Caco-2 (cell line): ENCODE measurements at regions of chr1 and their contacts with region 1.

Region 1: DNA sequence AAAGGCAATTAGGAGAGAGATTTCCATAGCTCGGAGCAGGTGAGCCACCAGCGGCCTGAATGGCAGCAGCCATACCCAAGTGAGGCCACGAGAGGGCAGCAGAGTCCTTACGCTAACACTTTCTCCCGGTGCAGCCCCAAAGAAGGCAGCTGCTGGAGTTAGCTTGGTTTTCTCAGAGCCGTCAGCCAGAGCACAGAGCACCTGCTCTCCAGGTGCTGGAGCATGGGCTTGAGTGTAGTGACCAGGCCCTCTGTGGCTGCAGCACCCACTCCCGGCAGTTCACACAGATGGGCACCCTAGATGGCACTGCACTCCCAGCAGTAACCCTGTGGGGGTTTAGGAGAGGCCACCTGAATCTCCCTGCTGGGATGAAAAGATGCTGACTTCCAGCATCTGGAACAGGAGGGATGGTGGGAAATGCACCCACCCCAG is 45.8 kb downstream of the TMCC2 start:
- DNase-seq: peak; percentile 87 to 88
- H3K4me3 ChIP-seq: no peak overlapping the region
- H3K4me3 Mint-ChIP-seq: no peak overlapping the region
- H3K27ac Mint-ChIP-seq: peak overlapping the region; percentile 59
- H3K4me1 ChIP-seq: peaks cover 40% of the 10 kb centered on the region
- H3K4me1 Mint-ChIP-seq: peaks cover 17% of the 10 kb centered on the region
- H3K27me3 ChIP-seq: no peaks in the 10 kb centered on the region
- H3K27me3 Mint-ChIP-seq: no peaks in the 10 kb centered on the region
- CTCF ChIP-seq: peak; percentile 96 to 97

Region 2: DNA sequence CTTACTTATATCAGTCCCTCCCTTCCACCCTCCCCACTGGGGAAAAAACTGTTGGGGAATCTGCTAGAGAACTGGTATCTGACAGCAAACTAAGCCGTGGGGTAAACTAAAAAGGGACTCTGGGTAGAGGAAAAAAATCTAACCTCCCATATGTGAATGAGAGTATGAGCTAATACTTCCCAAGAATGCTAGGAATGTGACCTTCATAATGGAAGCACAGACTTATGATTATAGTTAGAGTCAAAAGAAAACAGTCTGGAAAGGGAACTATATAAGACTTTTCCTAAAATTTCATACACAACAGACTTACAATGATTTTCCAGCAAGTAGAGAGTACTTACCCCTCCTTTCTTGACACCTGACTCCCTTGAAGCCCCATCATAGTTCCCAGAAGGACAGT is 128.8 kb before region 1 on chr1:
- CTCF ChIA-PET with region 1: no interaction called
- POLR2A ChIA-PET with region 1: no interaction called
- intact Hi-C with region 1: no loop called
- DNase-seq: peak in 1 of 2 experiments; percentile 7
- H3K4me3 ChIP-seq: no peak overlapping the region
- H3K4me3 Mint-ChIP-seq: no peak overlapping the region
- H3K27ac Mint-ChIP-seq: no peak overlapping the region
- H3K4me1 ChIP-seq: peaks cover 15% of the 10 kb centered on the region
- H3K4me1 Mint-ChIP-seq: peaks cover 11% of the 10 kb centered on the region
- H3K27me3 ChIP-seq: no peaks in the 10 kb centered on the region
- H3K27me3 Mint-ChIP-seq: no peaks in the 10 kb centered on the region
- CTCF ChIP-seq: no peak

Region 3: GRCh38 chr1:205284343-205285144 is 11.0 kb after region 1 on chr1:
- CTCF ChIA-PET with region 1: interaction called, 30 read pairs
- POLR2A ChIA-PET with region 1: interaction called, 5 read pairs
- intact Hi-C with region 1: loop called (anchors 1 kb)
- DNase-seq: peak; percentile 95 to 98
- H3K4me3 ChIP-seq: no peak overlapping the region
- H3K4me3 Mint-ChIP-seq: peak overlapping the region; percentile 38
- H3K27ac Mint-ChIP-seq: peak overlapping the region; percentile 69
- H3K4me1 ChIP-seq: peaks cover 35% of the 10 kb centered on the region
- H3K4me1 Mint-ChIP-seq: peaks cover 41% of the 10 kb centered on the region
- H3K27me3 ChIP-seq: no peaks in the 10 kb centered on the region
- H3K27me3 Mint-ChIP-seq: no peaks in the 10 kb centered on the region
- CTCF ChIP-seq: peak in 1 of 2 experiments; percentile 28

Region 4: GRCh38 chr1:205294175-205294913 is 20.8 kb after region 1 on chr1:
- CTCF ChIA-PET with region 1: interaction called, 12 read pairs
- POLR2A ChIA-PET with region 1: no interaction called
- intact Hi-C with region 1: no loop called
- DNase-seq: peak; percentile 74 to 88
- H3K4me3 ChIP-seq: no peak overlapping the region
- H3K4me3 Mint-ChIP-seq: peak overlapping the region; percentile 46
- H3K27ac Mint-ChIP-seq: peak overlapping the region; percentile 97
- H3K4me1 ChIP-seq: peaks cover 79% of the 10 kb centered on the region
- H3K4me1 Mint-ChIP-seq: peaks cover 51% of the 10 kb centered on the region
- H3K27me3 ChIP-seq: no peaks in the 10 kb centered on the region
- H3K27me3 Mint-ChIP-seq: no peaks in the 10 kb centered on the region
- CTCF ChIP-seq: no peak

Region 5: DNA sequence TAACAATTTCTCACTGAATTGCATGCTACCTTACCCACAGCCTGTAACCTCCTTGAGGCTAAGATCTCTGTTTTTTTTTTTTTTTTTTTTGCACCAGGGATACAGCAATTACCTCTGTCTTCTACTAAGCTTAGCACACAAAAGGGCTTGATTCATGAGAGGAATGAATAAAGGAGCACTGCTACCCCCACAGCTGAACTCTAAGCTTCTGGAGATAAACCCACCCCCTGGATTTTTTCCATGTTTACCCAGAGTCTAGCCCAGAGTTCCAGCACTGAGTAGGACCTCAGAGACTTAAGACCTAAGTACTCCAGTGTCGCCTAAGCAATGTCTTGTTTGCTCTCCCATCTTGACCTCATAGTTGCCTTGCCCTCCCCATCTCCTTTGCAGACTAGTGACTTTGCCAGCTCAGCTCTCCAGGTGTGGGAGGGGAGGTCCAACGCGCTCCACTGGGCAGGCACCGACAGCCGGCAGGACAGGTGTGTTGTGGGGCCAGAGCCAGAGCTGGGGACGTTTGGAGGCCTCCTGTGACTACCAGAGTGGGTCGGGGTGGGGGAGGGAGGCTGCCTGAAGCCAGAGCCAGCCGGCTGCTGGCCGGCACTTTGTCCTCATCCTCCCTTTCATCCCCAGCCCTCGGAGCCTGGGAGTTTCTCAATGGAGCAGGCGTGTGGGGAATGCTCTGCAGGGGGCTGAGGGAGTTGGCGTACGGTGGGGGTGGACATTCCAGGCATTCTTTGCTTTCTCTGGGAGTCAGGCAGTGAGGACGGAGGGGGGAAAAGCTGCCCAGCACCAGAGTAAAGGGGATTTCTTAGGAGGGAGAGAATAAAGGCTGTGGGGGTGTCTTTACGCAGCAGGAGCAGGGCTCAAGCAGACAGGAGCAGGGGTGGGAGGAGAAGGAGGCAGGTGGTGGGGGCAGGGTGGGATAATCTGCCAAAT is 27.6 kb after region 1 on chr1:
- CTCF ChIA-PET with region 1: interaction called, 41 read pairs
- POLR2A ChIA-PET with region 1: interaction called, 9 read pairs
- intact Hi-C with region 1: loop called (anchors 1 kb)
- DNase-seq: peak; percentile 97 to 99
- H3K4me3 ChIP-seq: peak overlapping the region; percentile 5; the same call in 1 of the 2 replicates
- H3K4me3 Mint-ChIP-seq: peak overlapping the region; percentile 56
- H3K27ac Mint-ChIP-seq: peak overlapping the region; percentile 97
- H3K4me1 ChIP-seq: peaks cover 76% of the 10 kb centered on the region
- H3K4me1 Mint-ChIP-seq: peaks cover 58% of the 10 kb centered on the region
- H3K27me3 ChIP-seq: no peaks in the 10 kb centered on the region
- H3K27me3 Mint-ChIP-seq: no peaks in the 10 kb centered on the region
- CTCF ChIP-seq: no peak

Region 6: DNA sequence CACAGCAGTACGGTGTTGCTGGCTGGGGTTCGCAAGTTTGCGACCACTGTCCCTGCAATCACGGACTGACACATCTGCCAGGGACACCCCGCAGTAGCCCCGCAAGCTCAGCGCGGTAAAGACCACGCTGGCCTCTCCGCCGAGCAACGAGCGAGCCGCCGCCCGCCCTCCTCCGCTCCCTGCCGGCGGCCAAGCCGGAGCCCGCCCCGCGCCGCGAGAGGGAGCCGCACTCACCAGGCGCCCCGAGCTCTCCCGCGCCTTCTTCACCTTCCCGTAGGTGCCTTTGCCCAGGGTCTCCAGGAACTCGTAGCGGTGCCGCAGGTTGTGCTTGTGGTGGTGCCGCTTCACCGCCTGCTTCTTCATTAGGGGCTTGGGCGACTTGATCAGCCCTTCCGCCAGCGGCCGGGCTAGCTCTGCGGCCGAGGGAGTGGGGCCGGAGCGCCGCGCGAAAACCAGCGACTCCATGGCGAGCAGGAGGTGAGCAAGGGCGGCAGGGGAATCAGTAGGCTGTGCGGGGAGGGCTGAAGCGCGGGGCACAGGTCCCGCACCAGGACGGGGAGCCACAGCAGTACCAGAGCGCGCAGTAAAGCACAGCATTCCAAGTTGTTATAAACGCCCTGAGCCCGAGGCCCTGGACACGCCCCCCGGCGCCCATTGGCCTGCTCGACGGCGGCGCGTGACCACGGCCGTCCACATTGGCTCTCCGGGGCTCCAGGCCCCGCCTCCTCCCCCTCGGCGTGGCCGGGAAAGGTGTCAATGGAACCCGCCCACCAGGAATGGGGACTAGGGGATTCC is 47.8 kb after region 1 on chr1 and contains the start of gene NUAK2:
- CTCF ChIA-PET with region 1: interaction called, 341 read pairs
- POLR2A ChIA-PET with region 1: interaction called, 12 read pairs
- intact Hi-C with region 1: loop called (anchors 1 kb)
- DNase-seq: peak; percentile 97 to 99
- H3K4me3 ChIP-seq: peak within 1 kb of the TSS; percentile 93
- H3K4me3 Mint-ChIP-seq: peak within 1 kb of the TSS; percentile 96
- H3K27ac Mint-ChIP-seq: peak within 1 kb of the TSS; percentile 93
- H3K4me1 ChIP-seq: peaks cover 40% of the 10 kb centered on the region
- H3K4me1 Mint-ChIP-seq: peaks cover 52% of the 10 kb centered on the region
- H3K27me3 ChIP-seq: no peaks in the 10 kb centered on the region
- H3K27me3 Mint-ChIP-seq: no peaks in the 10 kb centered on the region
- CTCF ChIP-seq: peak in 1 of 2 experiments; percentile 24
- total RNA-seq, gene NUAK2: 25.7 and 27.0 TPM in 2 replicates

Region 7: DNA sequence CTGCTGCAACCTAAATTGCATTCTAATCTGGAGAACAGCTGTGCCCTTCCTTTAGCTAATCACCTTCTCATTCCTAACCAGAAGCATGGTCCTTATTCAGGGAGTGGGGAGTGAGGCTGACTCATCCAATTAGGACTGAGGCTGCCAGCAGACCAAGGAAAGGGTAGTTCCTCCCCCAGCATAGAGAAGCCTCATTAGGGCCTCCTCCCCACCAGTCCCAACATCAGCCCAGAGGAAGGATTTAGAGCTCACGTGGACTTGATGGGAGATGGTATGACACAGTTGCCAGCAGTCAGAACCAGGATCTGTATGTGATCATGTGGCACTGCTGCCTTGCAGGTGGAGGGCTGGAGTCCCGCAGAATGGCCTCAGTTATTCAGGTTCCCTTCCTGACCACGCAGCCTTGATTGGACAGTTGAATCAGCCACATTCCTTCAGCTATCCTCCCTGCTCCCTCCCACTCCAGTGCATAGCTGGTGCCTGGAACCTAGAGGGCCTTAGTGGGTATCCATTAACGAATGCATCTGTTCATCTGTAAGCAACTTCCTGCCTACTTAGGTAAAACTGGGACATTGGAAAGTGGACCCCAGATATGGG is 75.4 kb after region 1 on chr1:
- CTCF ChIA-PET with region 1: interaction called, 16 read pairs
- POLR2A ChIA-PET with region 1: no interaction called
- intact Hi-C with region 1: no loop called
- DNase-seq: no peak
- H3K4me3 ChIP-seq: no peak overlapping the region
- H3K4me3 Mint-ChIP-seq: no peak overlapping the region
- H3K27ac Mint-ChIP-seq: no peak overlapping the region
- H3K4me1 ChIP-seq: peaks cover 5% of the 10 kb centered on the region; the same call in 1 of the 2 replicates
- H3K4me1 Mint-ChIP-seq: peaks cover 7% of the 10 kb centered on the region
- H3K27me3 ChIP-seq: no peaks in the 10 kb centered on the region; the same call in 1 of the 2 replicates
- H3K27me3 Mint-ChIP-seq: peaks cover 9% of the 10 kb centered on the region
- CTCF ChIP-seq: no peak

Region 8: DNA sequence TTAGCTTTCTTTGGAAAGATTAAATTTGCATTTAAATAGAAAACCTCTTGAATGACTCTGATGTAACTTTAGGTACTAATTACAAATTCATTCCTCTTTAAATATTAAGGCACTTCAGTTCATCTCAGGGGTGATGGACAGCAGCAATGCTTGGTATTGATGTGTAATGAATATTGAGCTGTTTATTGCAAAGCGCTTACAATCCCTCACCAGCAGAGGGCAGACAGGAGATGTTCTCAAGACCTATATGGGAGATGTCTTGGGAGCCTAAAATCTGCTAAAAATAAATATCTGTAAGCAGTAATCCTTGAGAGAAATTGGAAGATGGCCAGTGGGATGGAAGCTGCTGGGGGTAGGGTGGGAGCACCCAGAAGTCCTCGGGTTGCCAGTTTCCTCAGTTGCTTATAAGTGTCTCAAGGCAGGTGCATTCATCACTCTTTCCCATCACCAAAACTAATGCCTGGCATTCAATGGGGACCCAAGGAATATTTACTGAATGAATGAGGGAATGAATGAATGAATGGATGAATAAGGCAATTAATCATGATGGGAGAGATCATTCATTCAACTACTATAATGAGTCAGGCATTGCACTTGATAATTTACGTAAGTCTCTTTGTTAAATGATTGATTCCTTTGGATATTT is 80.8 kb after region 1 on chr1:
- CTCF ChIA-PET with region 1: interaction called, 16 read pairs
- POLR2A ChIA-PET with region 1: interaction called, 3 read pairs
- intact Hi-C with region 1: no loop called
- DNase-seq: peak; percentile 57 to 63
- H3K4me3 ChIP-seq: no peak overlapping the region
- H3K4me3 Mint-ChIP-seq: no peak overlapping the region
- H3K27ac Mint-ChIP-seq: no peak overlapping the region
- H3K4me1 ChIP-seq: peaks cover 4% of the 10 kb centered on the region; the same call in 1 of the 2 replicates
- H3K4me1 Mint-ChIP-seq: peaks cover 6% of the 10 kb centered on the region
- H3K27me3 ChIP-seq: no peaks in the 10 kb centered on the region
- H3K27me3 Mint-ChIP-seq: peaks cover 11% of the 10 kb centered on the region
- CTCF ChIP-seq: peak; percentile 80 to 85